ENCODE measurements at regions of chr14 and their contacts with region 1.

Region 1: DNA sequence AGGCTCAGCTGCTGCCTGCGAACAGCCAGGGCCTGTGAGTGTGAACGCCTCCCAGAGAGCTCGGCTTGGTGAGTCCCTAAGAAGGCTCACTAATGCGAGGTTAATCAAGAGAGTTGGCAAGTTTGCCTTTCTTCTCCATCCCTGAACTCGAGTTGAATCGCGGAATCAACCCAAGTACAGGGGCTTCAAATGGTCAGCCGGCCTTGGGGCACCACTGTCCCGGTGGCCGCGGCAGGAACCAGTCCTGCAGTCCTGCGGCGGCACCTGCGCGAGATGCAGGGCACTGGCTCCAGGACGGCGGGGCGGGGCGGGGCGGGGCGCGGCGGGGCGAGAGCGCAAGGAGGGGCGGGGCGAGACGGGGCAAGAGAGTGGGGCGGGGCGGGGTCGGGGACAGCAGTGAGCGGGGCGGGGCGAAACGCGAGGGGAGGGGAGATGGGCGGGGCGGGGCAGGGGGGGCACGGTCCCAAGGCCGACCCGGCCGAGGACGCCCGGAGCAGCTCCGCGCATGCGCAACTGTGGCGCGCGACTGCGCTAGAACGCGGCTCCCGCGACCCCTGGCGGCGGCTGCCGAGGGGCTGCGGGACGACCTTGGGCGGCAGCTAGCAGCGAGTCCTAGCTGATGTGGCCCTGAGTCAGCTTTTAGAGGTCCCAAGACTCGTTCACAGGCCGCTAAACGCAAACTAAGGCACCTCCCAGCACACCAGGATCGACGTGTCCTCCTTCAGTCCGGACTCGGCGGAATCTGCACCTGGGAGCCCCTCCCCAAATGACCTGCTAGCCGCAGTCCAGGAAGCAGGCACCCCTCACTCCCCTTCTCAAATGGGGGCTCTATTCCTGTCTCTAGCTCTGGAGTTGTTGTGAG is 58.0 kb downstream of the TTC7B start:
- DNase-seq: peak; percentile 97
- H3K4me3 Mint-ChIP-seq: peak overlapping the region; percentile 73
- H3K27ac Mint-ChIP-seq: peak overlapping the region; percentile 75
- H3K4me1 Mint-ChIP-seq: peaks cover 22% of the 10 kb centered on the region
- H3K27me3 Mint-ChIP-seq: no peaks in the 10 kb centered on the region

Region 2: DNA sequence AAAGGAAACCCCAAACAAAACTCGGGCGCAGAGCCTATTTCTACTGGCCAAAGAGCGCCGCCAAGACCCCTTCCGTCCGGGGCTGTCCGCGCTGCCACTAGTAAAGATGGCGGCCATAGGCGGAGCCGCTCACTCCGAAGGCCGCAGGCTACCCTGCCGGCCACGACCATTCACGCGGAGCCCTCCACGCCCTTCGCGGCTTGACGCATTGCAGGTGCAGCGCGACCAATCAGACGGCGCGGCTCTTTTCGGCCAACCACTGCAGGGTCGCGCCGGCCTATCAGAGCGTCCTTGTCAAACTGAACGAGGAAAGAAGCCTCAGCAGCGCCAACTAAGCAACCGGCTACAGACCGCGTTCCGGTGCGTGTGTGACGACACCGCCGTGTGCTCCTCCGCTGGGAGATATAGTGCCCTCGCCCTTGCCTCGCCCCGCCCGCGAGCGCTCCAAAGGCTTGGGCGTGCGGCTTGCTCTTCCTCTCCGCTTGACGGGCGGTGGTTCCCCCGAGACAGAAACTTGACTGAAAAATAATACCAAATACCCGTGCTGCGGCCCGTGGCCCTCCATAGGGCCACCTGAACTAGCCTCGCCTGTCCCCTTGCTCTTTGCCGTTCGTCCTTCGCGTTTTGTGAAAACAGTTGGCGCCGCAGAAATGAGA is 375.1 kb before region 1 on chr14:
- CTCF ChIA-PET with region 1: no interaction called
- POLR2A ChIA-PET with region 1: interaction called, 4 read pairs
- intact Hi-C with region 1: loop called (anchors 5 kb)
- DNase-seq: peak; percentile 99
- H3K4me3 Mint-ChIP-seq: no peak overlapping the region
- H3K27ac Mint-ChIP-seq: no peak overlapping the region
- H3K4me1 Mint-ChIP-seq: peaks cover 22% of the 10 kb centered on the region
- H3K27me3 Mint-ChIP-seq: no peaks in the 10 kb centered on the region

Region 3: DNA sequence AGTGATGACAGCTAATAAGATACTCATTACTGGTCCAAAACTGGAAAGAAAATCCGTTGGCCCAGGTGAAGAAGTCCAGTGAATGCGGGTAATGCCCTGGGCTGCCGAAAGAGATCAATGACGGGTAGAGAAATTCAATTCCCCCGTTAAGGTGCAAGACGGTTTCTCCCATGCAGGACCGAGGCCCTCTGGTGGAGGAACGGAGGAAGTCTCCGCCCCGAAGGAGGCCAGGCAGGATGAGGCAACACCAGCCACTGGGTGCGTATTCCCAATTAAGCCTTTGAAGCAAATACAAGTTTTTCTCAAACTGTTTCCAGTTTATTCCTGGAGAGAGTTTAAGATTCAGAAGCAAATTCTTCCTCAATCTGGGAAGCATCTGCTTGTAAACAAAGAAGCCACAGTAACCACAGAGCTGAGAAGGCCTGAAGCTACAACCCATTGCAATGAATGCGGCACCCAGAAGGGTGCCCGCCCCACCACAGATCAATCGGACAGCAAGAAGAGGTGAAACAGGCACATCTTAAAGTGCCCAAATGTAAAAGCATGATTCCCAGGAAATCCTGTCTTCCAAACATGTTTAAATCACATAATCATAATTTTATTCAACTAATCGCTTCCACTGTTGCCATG is 60.6 kb before region 1 on chr14:
- CTCF ChIA-PET with region 1: interaction called, 18 read pairs
- POLR2A ChIA-PET with region 1: no interaction called
- intact Hi-C with region 1: no loop called
- DNase-seq: peak; percentile 84
- H3K4me3 Mint-ChIP-seq: no peak overlapping the region
- H3K27ac Mint-ChIP-seq: no peak overlapping the region
- H3K4me1 Mint-ChIP-seq: no peaks in the 10 kb centered on the region
- H3K27me3 Mint-ChIP-seq: no peaks in the 10 kb centered on the region

Region 4: DNA sequence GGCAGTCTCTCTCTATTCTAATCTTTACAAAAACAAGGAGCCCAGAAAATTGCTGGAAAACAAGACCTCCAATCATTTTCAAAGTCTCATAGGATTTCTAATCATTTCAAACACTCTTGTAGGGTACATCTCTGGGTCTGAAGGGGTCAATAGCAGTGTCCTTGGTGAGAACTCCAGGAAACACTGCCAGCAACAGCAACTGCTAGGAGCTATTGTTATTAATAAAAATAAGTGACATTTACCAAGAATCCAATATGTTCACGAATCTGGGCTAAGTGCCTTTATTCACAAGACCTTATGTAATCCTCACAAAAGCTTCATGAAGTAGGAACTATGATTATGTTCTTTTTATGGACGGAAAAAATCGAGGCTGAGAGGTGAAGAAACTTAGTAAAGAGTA is 14.8 kb before region 1 on chr14:
- CTCF ChIA-PET with region 1: interaction called, 15 read pairs
- POLR2A ChIA-PET with region 1: no interaction called
- intact Hi-C with region 1: no loop called
- DNase-seq: no peak
- H3K4me3 Mint-ChIP-seq: no peak overlapping the region
- H3K27ac Mint-ChIP-seq: no peak overlapping the region
- H3K4me1 Mint-ChIP-seq: no peaks in the 10 kb centered on the region
- H3K27me3 Mint-ChIP-seq: no peaks in the 10 kb centered on the region

Region 5: DNA sequence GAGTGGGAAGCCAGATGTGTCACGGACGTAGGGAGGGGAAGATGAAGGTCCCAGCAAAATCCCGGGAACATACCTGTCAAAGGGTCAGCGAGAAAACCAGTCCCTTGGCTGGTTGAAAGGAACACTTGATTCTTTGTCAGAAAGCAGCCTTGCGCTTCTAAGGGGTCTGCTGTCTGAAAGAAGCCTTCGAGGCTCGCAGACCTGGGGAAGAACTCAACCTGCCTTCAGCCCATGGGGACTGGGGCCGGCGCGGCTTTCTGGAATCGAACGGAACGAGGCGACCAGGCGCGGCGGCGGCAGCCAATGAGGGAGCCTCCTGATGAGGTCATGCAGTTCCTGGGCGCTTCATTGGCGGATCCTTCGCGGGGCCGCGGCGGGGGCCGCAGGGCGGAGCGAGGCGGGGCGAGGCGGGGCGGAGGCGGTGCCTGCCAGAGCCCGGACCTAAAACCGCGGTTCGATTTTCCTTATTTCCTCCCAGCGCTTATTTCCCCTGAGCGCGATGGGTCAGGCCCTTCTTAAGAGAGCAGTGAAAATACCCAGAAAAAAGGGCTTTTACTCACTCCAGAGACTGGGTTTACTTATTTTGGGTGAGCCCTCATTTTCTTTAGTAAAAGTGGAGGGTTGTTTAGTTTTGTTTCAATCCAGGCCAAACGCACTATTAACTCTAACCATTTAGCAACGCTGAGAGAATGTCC is 69.8 kb after region 1 on chr14:
- CTCF ChIA-PET with region 1: interaction called, 4 read pairs
- POLR2A ChIA-PET with region 1: interaction called, 3 read pairs
- intact Hi-C with region 1: loop called (anchors 2 kb)
- DNase-seq: peak; percentile 96
- H3K4me3 Mint-ChIP-seq: peak overlapping the region; percentile 80
- H3K27ac Mint-ChIP-seq: peak overlapping the region; percentile 88
- H3K4me1 Mint-ChIP-seq: peaks cover 21% of the 10 kb centered on the region
- H3K27me3 Mint-ChIP-seq: no peaks in the 10 kb centered on the region